ENCODE measurements at regions of chr2 and their contacts with region 1.

Region 1: DNA sequence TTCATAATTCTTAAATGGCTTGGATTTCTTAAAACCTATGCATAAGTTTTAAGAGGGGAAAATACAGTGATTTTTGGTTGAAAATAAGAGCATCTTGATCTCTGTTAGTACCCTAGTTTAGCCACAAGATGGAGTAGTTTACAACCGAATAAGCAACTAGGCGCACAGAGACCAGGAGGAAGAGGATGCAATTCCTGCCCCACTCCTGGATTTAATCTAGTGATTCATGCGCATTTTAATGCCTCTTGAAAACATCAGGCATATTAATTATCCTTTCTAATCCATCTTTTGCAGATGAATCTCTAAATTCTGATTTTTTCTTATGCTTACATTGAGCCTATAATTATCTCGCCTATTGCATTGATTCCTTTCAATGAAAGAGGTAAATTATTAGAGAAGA is 76.7 kb downstream of the MRPS9 start:
- H3K4me3 Mint-ChIP-seq: no peak overlapping the region
- H3K27ac Mint-ChIP-seq: no peak overlapping the region
- H3K4me1 Mint-ChIP-seq: no peaks in the 10 kb centered on the region
- H3K27me3 Mint-ChIP-seq: peaks cover 4% of the 10 kb centered on the region

Region 2: DNA sequence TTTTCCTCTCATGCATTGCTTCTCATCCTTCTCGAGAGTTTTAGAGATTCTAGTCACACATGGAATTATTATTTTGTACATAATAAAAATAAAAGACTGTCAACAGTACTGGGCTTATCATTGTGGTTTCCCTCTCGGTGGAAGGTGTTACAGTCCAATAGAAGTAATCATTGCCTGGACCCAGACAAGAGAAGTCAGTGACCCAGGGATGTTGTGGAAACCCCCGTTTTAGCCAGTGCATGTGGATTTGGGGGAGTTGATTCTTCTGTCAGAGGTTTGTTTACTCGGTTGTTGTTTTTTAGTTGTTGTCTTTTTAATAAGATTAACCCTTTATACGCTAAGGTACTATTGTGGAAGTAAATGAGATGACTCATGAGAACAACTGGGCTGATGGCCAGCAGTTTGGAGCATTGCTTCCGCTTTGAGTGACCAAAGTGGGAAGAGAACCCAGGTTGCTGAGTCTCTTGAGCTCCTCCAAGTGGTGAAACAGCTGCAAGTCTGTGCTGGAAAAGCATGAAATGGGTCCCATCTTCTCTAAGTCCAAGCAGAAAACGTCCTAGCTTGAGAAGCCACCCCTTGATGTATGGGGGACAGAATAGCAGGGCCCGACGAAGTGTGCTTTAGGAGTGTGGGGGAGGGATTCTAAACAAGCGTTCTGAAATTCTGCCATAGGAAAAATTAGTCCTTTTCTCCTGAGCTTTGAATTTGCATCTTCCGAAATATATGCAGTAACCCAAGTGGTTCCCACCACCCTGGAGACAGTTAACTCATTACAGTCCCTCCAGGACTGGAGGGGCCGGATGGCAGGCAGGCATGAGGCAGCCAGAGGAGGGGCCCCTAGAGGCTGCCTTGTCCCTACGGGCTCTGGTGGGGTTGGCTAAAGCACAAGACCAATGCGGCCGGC is 65.2 kb after region 1 on chr2:
- intact Hi-C with region 1: loop called (anchors 5 kb)
- H3K4me3 Mint-ChIP-seq: no peak overlapping the region
- H3K27ac Mint-ChIP-seq: no peak overlapping the region
- H3K4me1 Mint-ChIP-seq: peaks cover 33% of the 10 kb centered on the region
- H3K27me3 Mint-ChIP-seq: peaks cover 32% of the 10 kb centered on the region

Region 3: GRCh38 chr2:105235388-105236054 is 121.0 kb after region 1 on chr2:
- intact Hi-C with region 1: loop called (anchors 1 kb)
- H3K4me3 Mint-ChIP-seq: no peak overlapping the region
- H3K27ac Mint-ChIP-seq: no peak overlapping the region
- H3K4me1 Mint-ChIP-seq: peaks cover 9% of the 10 kb centered on the region
- H3K27me3 Mint-ChIP-seq: peaks cover 33% of the 10 kb centered on the region

Region 4: DNA sequence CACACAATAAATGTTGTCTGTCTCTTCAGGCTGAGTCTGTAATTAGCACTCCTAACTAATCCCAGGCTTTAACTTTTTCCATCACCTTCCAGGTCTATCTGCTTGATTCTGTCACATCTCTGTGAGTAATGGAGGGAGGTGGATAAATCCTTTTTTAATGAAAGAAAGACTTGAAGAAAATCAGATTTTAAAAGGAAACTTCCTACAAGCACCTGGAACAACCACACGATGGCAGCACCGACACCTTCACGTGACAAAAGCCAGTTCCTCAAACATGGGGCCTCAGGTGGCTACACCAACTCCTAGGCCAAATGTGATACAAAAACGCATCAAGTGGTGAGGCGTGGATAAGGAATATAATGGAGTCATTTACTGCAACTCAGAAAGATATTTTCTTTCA is 173.1 kb after region 1 on chr2:
- intact Hi-C with region 1: no loop called
- H3K4me3 Mint-ChIP-seq: no peak overlapping the region
- H3K27ac Mint-ChIP-seq: no peak overlapping the region
- H3K4me1 Mint-ChIP-seq: no peaks in the 10 kb centered on the region
- H3K27me3 Mint-ChIP-seq: no peaks in the 10 kb centered on the region